ENCODE measurements at regions of chr3 and their contacts with region 1.

Region 1: GRCh38 chr3:49454458-49454857 is 15.6 kb upstream of the DAG1 start:
- DNase-seq: peak; percentile 47
- H3K4me3 ChIP-seq: no peak overlapping the region
- H3K27ac ChIP-seq: no peak overlapping the region
- H3K4me1 ChIP-seq: peaks cover 16% of the 10 kb centered on the region
- H3K27me3 ChIP-seq: no peaks in the 10 kb centered on the region
- CTCF ChIP-seq: peak; percentile 45 to 55

Region 2: GRCh38 chr3:49295489-49296058 is 158.9 kb before region 1 on chr3:
- CTCF ChIA-PET with region 1: no interaction called
- dilution Hi-C with region 1: no loop called
- in situ Hi-C with region 1: no loop called
- intact Hi-C with region 1: loop called (anchors 1 kb)
- DNase-seq: no peak
- H3K4me3 ChIP-seq: no peak overlapping the region
- H3K27ac ChIP-seq: no peak overlapping the region
- H3K4me1 ChIP-seq: peaks cover 14% of the 10 kb centered on the region
- H3K27me3 ChIP-seq: no peaks in the 10 kb centered on the region
- CTCF ChIP-seq: peak; percentile 52 to 57

Region 3: DNA sequence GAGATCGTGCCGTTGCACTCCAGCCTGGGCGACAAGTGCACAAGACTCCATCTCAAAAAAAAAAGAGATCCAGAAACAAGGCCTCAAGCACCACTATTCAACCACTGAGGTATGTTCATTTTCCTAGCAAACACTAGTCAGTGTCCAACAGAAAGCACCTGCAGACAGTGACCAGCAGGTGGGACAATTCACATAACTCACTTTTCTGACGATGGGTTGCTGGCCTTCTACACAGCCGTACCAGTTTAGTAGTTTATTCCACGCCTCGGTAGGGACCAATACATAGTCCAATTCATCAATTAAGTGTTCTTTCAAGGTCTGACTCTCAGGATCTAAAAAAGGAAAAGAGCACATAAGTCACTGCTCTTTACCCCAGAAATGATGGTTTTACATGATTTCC is 127.0 kb before region 1 on chr3:
- CTCF ChIA-PET with region 1: no interaction called
- dilution Hi-C with region 1: no loop called
- in situ Hi-C with region 1: no loop called
- intact Hi-C with region 1: loop called (anchors 1 kb)
- DNase-seq: no peak
- H3K4me3 ChIP-seq: no peak overlapping the region
- H3K27ac ChIP-seq: no peak overlapping the region
- H3K4me1 ChIP-seq: peaks cover 4% of the 10 kb centered on the region
- H3K27me3 ChIP-seq: no peaks in the 10 kb centered on the region
- CTCF ChIP-seq: peak; percentile 36 to 40

Region 4: DNA sequence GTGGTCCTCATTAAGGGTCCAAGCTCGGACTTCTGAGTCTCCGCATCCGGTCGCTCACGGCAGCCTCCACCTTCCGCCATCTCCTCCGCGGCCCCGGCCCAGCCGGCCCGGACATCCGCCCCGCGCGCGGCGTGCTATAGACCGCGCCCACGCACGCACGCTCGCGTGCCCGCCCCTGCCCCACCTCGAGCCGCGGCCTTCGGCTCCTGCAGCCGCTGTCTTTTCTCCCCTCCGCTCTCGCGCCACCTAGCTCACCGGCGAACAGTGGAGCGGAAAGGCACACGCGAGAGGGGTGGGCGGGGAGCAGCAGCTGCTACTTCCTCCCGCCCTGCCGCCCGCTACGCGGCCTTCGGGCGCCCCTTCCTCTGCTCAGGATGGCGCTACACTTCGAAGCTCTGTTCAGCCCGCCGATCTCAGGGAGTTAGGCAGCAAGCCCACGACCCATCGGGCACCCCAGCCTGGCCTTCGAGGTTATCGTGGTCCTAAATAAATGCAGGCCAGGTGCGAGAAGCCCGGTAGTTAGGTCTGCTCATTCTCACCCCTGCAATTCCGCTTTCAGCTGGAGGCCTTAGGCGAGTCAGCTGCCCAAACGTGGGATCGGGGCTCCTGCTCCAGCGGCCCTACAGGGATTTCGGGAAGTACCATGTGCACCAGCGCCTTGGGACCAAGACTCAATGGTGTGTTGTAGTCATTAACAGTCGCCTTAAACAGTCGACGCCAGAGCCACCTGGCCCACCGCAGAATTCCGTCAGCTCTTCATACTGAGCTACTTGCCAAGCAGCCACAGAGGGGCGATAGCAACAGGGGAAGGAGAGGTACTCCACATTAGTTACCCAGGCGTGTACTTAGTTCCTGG is 114.3 kb before region 1 on chr3 and contains the start of gene USP4:
- CTCF ChIA-PET with region 1: no interaction called
- dilution Hi-C with region 1: no loop called
- in situ Hi-C with region 1: no loop called
- intact Hi-C with region 1: loop called (anchors 1 kb)
- DNase-seq: peak; percentile 85
- H3K4me3 ChIP-seq: peak within 1 kb of the TSS; percentile 68 to 86 (median 83)
- H3K27ac ChIP-seq: peak within 1 kb of the TSS; percentile 67
- H3K4me1 ChIP-seq: peaks cover 15% of the 10 kb centered on the region
- H3K27me3 ChIP-seq: no peaks in the 10 kb centered on the region
- CTCF ChIP-seq: peak; percentile 31 to 58
- total RNA-seq, gene USP4: 19.0 to 54.6 TPM

Region 5: GRCh38 chr3:49539659-49540560 is 85.5 kb after region 1 on chr3:
- CTCF ChIA-PET with region 1: no interaction called
- dilution Hi-C with region 1: no loop called
- in situ Hi-C with region 1: no loop called
- intact Hi-C with region 1: loop called (anchors 1 kb)
- DNase-seq: peak; percentile 93
- H3K4me3 ChIP-seq: peak overlapping the region; percentile 30 to 47 (median 42)
- H3K27ac ChIP-seq: no peak overlapping the region
- H3K4me1 ChIP-seq: peaks cover 5% of the 10 kb centered on the region
- H3K27me3 ChIP-seq: no peaks in the 10 kb centered on the region
- CTCF ChIP-seq: peak; percentile 55 to 89

Measured in mammary epithelial cell (primary cell).